PC-3 (cell line): ENCODE measurements at regions of chr4 and their contacts with region 1.

Region 1: DNA sequence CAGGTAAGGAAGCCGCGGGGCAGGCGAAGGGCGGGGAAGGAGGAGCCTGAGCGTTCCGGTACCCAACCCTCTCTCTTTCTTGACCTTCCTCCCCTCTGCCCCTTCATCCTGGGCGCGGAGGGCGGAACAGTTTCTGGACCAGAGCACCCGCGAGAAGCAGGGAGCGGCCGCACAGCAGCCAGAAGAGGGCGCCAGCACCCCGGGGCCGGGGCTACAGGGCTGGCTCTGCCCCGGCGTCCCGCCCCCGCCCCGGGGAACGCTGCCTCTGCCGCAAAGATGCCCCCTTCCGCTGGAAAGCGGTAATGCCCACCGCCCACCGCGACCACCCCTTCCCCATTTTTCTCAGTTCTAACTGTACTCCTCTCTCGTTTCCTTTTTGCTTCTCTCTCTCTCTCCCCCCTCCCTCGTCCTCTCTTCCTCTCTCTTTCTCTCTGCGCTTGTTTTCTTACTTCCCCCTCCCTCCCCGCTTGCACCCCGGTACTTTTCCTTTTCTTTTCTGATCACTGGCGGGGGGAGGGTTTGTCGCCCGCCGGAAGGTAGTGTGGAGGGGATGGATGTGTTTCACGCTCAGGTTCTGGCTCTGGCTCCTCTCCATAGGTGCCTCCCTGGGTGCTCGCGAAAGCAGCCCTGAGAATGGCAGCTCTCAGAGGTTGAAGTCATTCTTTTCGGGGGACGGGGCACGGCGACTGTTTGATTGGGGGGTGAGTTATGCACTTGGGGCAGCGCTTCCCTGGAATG is 13.1 kb upstream of the PRDM8 start:
- DNase-seq: peak; percentile 85
- ATAC-seq: peak; percentile 80
- H3K4me3 ChIP-seq: peak overlapping the region; percentile 98
- H3K27ac ChIP-seq: peak overlapping the region; percentile 71
- H3K4me1 ChIP-seq: peaks cover 21% of the 10 kb centered on the region
- H3K27me3 ChIP-seq: no peaks in the 10 kb centered on the region
- CTCF ChIP-seq: peak; percentile 76

Region 2: GRCh38 chr4:80026100-80026499 is 158.1 kb before region 1 on chr4:
- CTCF ChIA-PET with region 1: no interaction called
- POLR2A ChIA-PET with region 1: no interaction called
- intact Hi-C with region 1: no loop called
- DNase-seq: peak; percentile 14
- ATAC-seq: no peak
- H3K4me3 ChIP-seq: no peak overlapping the region
- H3K27ac ChIP-seq: no peak overlapping the region
- H3K4me1 ChIP-seq: peaks cover 18% of the 10 kb centered on the region
- H3K27me3 ChIP-seq: no peaks in the 10 kb centered on the region
- CTCF ChIP-seq: no peak

Region 3: GRCh38 chr4:80112236-80112635 is 72.0 kb before region 1 on chr4:
- CTCF ChIA-PET with region 1: no interaction called
- POLR2A ChIA-PET with region 1: no interaction called
- intact Hi-C with region 1: no loop called
- DNase-seq: no peak
- ATAC-seq: no peak
- H3K4me3 ChIP-seq: no peak overlapping the region
- H3K27ac ChIP-seq: no peak overlapping the region
- H3K4me1 ChIP-seq: no peaks in the 10 kb centered on the region
- H3K27me3 ChIP-seq: no peaks in the 10 kb centered on the region
- CTCF ChIP-seq: no peak

Region 4: GRCh38 chr4:80125252-80126177 is 58.7 kb before region 1 on chr4:
- CTCF ChIA-PET with region 1: interaction called, 3 read pairs
- POLR2A ChIA-PET with region 1: no interaction called
- intact Hi-C with region 1: loop called (anchors 1 kb)
- DNase-seq: peak; percentile 48
- ATAC-seq: peak; percentile 41
- H3K4me3 ChIP-seq: no peak overlapping the region
- H3K27ac ChIP-seq: peak overlapping the region; percentile 85
- H3K4me1 ChIP-seq: peaks cover 42% of the 10 kb centered on the region
- H3K27me3 ChIP-seq: no peaks in the 10 kb centered on the region
- CTCF ChIP-seq: peak; percentile 68